ENCODE measurements at regions of chr3 and their contacts with region 1.

Region 1: GRCh38 chr3:159260049-159260662 is 458.3 kb downstream of the MFSD1 start:
- DNase-seq: peak; percentile 52
- H3K4me3 Mint-ChIP-seq: no peak overlapping the region
- H3K27ac Mint-ChIP-seq: no peak overlapping the region
- H3K4me1 Mint-ChIP-seq: no peaks in the 10 kb centered on the region
- H3K27me3 Mint-ChIP-seq: peaks cover 16% of the 10 kb centered on the region

Region 2: DNA sequence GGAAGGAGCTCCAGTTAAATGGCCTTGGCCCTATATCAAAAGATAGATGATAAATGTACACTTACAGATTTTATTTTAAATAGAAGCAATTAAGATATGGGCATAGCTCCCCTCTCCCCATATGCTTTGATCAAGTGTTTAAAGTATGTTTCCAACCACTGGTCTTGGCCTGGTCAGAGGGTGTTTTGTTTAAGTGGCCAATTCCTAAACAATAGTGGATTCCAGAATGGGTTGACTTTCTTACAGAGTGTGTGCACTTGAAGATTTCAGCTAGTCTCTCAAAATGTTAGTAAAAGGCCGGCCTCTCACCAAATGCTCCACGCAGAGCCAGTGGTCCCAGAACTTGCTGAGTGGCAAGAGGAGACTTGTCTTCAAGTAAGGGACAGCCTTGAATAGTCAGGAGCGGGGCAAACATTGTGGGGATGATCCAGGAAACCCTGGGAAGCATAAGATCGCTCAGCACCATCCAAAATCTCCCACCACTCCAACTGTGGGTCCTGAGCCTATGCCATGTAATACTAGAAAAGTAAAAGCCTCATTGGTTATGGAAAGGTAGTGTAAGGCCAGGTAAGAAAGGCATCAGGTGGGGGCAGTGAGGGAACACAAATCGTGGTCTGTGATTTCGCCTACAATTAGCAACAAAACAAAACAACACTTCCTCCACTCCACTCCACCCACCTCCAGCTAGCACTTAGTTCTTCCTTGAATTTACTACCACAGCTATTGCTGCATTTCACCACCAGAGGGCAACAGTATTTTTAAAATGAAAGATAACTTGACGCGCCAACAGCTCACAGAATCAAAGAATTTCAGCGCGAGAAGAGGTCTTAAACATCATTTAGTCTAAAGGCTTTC is 532.7 kb before region 1 on chr3:
- CTCF ChIA-PET with region 1: interaction called, 3 read pairs
- intact Hi-C with region 1: loop called (anchors 2 kb)
- DNase-seq: peak; percentile 66
- H3K4me3 Mint-ChIP-seq: peak overlapping the region; percentile 19
- H3K27ac Mint-ChIP-seq: no peak overlapping the region
- H3K4me1 Mint-ChIP-seq: peaks cover 23% of the 10 kb centered on the region
- H3K27me3 Mint-ChIP-seq: peaks cover 2% of the 10 kb centered on the region

Region 3: DNA sequence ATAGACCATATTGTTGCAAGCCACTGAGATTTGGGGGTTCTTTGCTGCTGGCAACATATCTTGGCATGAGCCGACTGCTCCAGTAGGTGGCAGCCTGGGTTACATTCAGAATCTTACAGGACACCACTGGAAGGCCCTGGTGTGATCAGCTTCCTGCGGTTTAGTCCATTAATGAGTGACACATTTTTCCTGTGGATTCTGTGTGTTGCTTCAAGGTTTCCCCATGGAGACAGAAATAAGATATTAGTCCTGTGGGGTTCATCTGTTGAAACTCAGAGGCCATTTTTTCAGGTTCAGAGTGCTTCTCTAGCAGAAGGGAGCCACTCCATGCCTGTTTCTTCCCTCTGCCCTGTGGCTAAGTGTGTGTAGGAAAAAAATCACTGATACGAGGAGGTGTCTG is 342.1 kb before region 1 on chr3:
- CTCF ChIA-PET with region 1: interaction called, 6 read pairs
- intact Hi-C with region 1: loop called (anchors 1 kb)
- DNase-seq: peak; percentile 51
- H3K4me3 Mint-ChIP-seq: no peak overlapping the region
- H3K27ac Mint-ChIP-seq: no peak overlapping the region
- H3K4me1 Mint-ChIP-seq: no peaks in the 10 kb centered on the region
- H3K27me3 Mint-ChIP-seq: peaks cover 5% of the 10 kb centered on the region

Region 4: DNA sequence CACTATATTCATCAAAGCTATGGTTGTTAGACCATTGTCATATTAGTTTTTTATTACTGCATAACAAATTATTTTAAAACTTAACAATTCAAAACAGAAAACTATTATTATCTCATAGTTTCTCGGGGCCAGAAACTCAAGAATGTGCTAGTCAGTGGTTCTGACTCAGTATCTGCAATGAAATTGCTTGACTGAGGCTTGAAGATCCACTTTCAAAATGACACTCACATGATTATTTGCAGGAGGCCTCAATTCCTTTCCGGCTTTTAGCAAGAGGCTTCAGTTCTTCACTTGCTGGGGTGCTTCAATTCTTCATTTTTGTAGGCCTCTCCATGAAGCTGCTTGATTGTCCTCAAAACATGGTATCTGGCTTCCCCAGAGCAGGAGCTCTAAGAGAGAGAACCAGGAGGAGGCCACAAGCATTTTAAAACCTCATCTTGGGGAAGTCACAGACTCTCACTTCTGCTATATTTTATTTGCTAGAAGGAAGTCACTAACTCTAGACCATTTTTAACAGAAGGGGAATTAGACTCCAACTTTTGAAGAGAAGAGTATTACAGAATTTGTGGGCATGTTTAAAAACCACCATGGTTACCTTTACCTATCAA is 74.6 kb before region 1 on chr3:
- CTCF ChIA-PET with region 1: no interaction called
- intact Hi-C with region 1: no loop called
- DNase-seq: no peak
- H3K4me3 Mint-ChIP-seq: no peak overlapping the region
- H3K27ac Mint-ChIP-seq: no peak overlapping the region
- H3K4me1 Mint-ChIP-seq: no peaks in the 10 kb centered on the region
- H3K27me3 Mint-ChIP-seq: peaks cover 3% of the 10 kb centered on the region

Region 5: GRCh38 chr3:159804726-159805410 is 544.7 kb after region 1 on chr3:
- CTCF ChIA-PET with region 1: interaction called, 16 read pairs
- intact Hi-C with region 1: loop called (anchors 1 kb)
- DNase-seq: peak; percentile 57
- H3K4me3 Mint-ChIP-seq: no peak overlapping the region
- H3K27ac Mint-ChIP-seq: no peak overlapping the region
- H3K4me1 Mint-ChIP-seq: no peaks in the 10 kb centered on the region
- H3K27me3 Mint-ChIP-seq: no peaks in the 10 kb centered on the region

Region 6: GRCh38 chr3:160486459-160486869 is 1226.3 kb after region 1 on chr3:
- CTCF ChIA-PET with region 1: no interaction called
- intact Hi-C with region 1: loop called (anchors 5 kb)
- DNase-seq: peak; percentile 14
- H3K4me3 Mint-ChIP-seq: no peak overlapping the region
- H3K27ac Mint-ChIP-seq: no peak overlapping the region
- H3K4me1 Mint-ChIP-seq: peaks cover 5% of the 10 kb centered on the region
- H3K27me3 Mint-ChIP-seq: peaks cover 7% of the 10 kb centered on the region